ENCODE measurements at regions of chr3 and their contacts with region 1.

Region 1: GRCh38 chr3:113745273-113746068 is 578 bp downstream of the NAA50 start:
- DNase-seq: peak; percentile 93
- H3K4me3 Mint-ChIP-seq: peak overlapping the region; percentile 89
- H3K27ac Mint-ChIP-seq: peak overlapping the region; percentile 99
- H3K4me1 Mint-ChIP-seq: peaks cover 62% of the 10 kb centered on the region
- H3K27me3 Mint-ChIP-seq: no peaks in the 10 kb centered on the region

Region 2: DNA sequence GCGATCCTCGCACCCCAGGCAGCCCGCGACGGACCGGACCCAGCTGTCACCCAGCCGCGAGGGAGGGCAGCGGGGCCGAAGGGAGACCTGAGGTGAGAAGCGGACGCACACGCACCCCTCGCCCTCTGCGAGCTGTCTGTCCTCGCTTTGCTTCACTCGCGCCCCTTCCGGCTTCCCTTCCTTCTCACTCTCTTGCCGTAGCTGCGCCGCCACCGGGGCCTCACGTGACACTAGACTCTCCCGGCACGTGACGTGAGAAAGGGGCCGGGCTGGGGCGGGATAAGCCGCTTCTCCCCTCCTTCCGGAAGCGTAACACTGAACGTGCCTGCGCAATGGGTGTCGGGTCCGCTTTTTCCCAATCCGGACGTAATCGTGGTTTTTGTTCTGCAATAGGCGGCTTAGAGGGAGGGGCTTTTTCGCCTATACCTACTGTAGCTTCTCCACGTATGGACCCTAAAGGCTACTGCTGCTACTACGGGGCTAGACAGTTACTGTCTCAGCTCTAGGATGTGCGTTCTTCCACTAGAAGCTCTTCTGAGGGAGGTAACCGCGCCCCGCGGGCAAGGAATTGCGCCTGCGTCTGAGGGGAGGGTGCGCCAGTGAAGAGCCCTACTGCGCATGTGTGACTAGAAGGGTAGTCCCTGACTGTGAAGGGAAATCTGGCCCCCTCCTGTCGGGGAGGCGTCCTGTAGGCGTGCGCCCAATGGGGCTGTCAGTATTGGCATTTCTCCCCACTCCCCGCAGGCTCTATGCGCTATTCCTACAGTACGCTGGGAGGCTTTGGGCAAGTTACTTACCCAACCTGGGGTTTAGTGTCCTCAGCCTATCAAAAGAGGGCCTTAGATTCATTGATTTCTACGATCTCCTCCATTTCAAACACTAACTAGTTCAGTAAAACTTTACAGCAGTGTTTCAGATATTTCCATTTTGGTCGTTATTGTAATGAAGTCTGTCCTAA is 1183.5 kb before region 1 on chr3 and contains the starts of genes ATG3 and SLC35A5:
- intact Hi-C with region 1: loop called (anchors 2 kb)
- DNase-seq: peak; percentile 100
- H3K4me3 Mint-ChIP-seq: peak within 1 kb of the TSS; percentile 98
- H3K27ac Mint-ChIP-seq: peak within 1 kb of the TSS; percentile 99
- H3K4me1 Mint-ChIP-seq: peaks cover 24% of the 10 kb centered on the region
- H3K27me3 Mint-ChIP-seq: no peaks in the 10 kb centered on the region
- total RNA-seq, gene ATG3: 66.9 and 69.1 TPM in 2 replicates
- total RNA-seq, gene SLC35A5: 15.5 and 16.3 TPM in 2 replicates

Region 3: GRCh38 chr3:113495035-113495434 is 250.4 kb before region 1 on chr3:
- intact Hi-C with region 1: loop called (anchors 2 kb)
- DNase-seq: peak; percentile 82
- H3K4me3 Mint-ChIP-seq: no peak overlapping the region
- H3K27ac Mint-ChIP-seq: no peak overlapping the region
- H3K4me1 Mint-ChIP-seq: no peaks in the 10 kb centered on the region
- H3K27me3 Mint-ChIP-seq: no peaks in the 10 kb centered on the region

Region 4: GRCh38 chr3:113614402-113614801 is 131.1 kb before region 1 on chr3:
- intact Hi-C with region 1: no loop called
- DNase-seq: no peak
- H3K4me3 Mint-ChIP-seq: no peak overlapping the region
- H3K27ac Mint-ChIP-seq: no peak overlapping the region
- H3K4me1 Mint-ChIP-seq: no peaks in the 10 kb centered on the region
- H3K27me3 Mint-ChIP-seq: no peaks in the 10 kb centered on the region

Region 5: GRCh38 chr3:113696658-113697499 is 48.6 kb before region 1 on chr3:
- intact Hi-C with region 1: loop called (anchors 1 kb)
- DNase-seq: peak; percentile 100
- H3K4me3 Mint-ChIP-seq: no peak overlapping the region
- H3K27ac Mint-ChIP-seq: no peak overlapping the region
- H3K4me1 Mint-ChIP-seq: peaks cover 27% of the 10 kb centered on the region
- H3K27me3 Mint-ChIP-seq: no peaks in the 10 kb centered on the region

Region 6: GRCh38 chr3:114043205-114043604 is 297.7 kb after region 1 on chr3:
- intact Hi-C with region 1: no loop called
- DNase-seq: no peak
- H3K4me3 Mint-ChIP-seq: no peak overlapping the region
- H3K27ac Mint-ChIP-seq: no peak overlapping the region
- H3K4me1 Mint-ChIP-seq: no peaks in the 10 kb centered on the region
- H3K27me3 Mint-ChIP-seq: peaks cover 8% of the 10 kb centered on the region

Region 7: DNA sequence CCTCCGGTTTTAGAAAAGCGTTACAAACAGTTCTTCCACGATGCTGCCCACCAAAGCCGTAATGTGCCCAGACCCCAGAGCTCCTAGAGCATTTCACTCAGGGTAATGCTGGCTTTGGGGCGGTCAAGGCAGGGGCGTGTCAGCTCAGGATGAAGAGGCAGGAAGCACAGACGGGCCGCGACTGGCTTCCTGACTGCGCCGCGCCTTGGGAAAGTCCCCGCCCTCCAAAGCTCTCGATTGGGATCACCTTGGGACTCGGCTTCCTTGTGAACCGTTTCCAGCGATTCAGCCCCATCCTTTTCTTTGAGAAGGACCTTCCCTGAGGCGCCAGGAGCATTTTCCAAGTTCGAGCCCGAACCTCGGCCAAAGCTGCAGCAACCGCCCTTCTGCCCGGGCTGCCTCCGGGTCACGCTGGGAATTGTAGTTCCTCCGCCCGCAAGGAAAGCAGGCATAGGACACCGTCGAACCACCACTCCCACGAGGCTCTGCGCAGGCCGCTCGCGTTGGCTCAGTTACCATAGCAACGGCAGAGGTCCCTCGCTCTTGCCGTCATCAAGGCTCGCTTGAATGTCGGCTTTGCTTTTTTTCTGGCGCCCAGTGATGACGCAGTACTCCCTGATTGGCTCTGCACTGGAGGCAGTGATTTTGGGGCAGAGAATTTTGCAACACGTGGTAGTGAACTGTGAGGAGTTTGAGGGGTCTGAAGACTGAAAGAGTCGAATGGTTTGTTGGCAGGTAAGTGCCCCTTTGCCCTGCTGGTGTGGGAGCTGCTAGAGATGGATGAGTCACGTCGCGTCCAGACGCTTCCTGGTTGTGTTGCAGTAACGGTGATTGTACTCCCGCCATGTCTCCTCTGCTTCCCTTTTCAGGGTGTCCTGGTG is 310.9 kb after region 1 on chr3 and contains the starts of genes CCDC191 and QTRT2:
- intact Hi-C with region 1: loop called (anchors 1 kb)
- DNase-seq: peak; percentile 100
- H3K4me3 Mint-ChIP-seq: peak within 1 kb of the TSS; percentile 93
- H3K27ac Mint-ChIP-seq: peak within 1 kb of the TSS; percentile 95
- H3K4me1 Mint-ChIP-seq: peaks cover 30% of the 10 kb centered on the region
- H3K27me3 Mint-ChIP-seq: peaks cover 2% of the 10 kb centered on the region
- total RNA-seq, gene CCDC191: 0.66 and 1.7 TPM in 2 replicates
- total RNA-seq, gene QTRT2: 50.5 and 55.3 TPM in 2 replicates

Region 8: GRCh38 chr3:114418724-114419543 is 673.5 kb after region 1 on chr3:
- intact Hi-C with region 1: loop called (anchors 5 kb)
- DNase-seq: peak; percentile 68
- H3K4me3 Mint-ChIP-seq: no peak overlapping the region
- H3K27ac Mint-ChIP-seq: peak overlapping the region; percentile 76
- H3K4me1 Mint-ChIP-seq: peaks cover 18% of the 10 kb centered on the region
- H3K27me3 Mint-ChIP-seq: no peaks in the 10 kb centered on the region